Mammary epithelial cell (primary cell): ENCODE measurements at regions of chr17 and their contacts with region 1.

Region 1: DNA sequence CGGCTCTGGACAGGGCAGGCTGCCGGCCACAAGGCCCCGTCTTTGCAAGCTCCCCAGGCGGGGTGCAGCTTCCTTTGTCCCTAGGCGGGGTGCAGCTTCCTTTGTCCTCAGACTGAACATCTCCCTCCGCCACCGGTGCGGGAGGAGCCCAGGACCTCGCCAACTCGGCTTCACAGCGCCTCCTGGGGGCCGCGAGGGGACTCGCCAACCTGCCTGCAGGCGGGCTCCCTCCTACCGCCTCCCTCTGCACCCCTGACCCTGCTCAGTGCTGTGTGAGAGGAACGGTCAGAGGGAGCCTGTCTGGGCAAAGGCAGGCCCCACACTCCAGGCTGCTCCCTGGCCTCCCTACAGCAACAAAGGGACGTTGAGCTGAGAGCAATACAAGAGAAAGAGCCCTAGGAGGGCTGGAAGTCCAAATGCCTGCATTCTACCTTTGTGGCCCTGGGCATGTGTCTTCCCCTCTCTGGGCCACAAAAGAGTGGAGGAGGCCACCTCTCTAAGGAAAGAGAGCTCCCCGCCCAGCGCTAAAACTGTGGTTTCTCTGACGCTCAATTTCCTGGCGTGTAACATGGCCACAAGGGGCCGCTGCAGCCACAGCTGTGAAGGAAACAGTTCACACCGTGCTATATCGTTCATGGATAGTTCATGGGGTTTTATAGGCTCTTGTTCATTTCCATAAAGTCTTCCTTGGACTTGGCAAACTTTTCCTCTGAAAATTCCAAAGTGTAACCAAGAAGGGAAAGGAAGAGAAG is 20.9 kb upstream of the KRT19 start:
- DNase-seq: peak; percentile 91
- H3K4me3 ChIP-seq: peak overlapping the region in 1 of 3 experiments; percentile 23
- H3K27ac ChIP-seq: peak overlapping the region; percentile 85
- H3K4me1 ChIP-seq: peaks cover 52% of the 10 kb centered on the region
- H3K27me3 ChIP-seq: no peaks in the 10 kb centered on the region
- CTCF ChIP-seq: peak; percentile 91 to 96

Region 2: GRCh38 chr17:40854159-40854814 is 694.7 kb before region 1 on chr17:
- CTCF ChIA-PET with region 1: interaction called, 3 read pairs
- dilution Hi-C with region 1: no loop called
- in situ Hi-C with region 1: no loop called
- intact Hi-C with region 1: loop called (anchors 1 kb)
- DNase-seq: peak; percentile 84
- H3K4me3 ChIP-seq: no peak overlapping the region
- H3K27ac ChIP-seq: no peak overlapping the region
- H3K4me1 ChIP-seq: peaks cover 20% of the 10 kb centered on the region
- H3K27me3 ChIP-seq: no peaks in the 10 kb centered on the region
- CTCF ChIP-seq: no peak

Region 3: DNA sequence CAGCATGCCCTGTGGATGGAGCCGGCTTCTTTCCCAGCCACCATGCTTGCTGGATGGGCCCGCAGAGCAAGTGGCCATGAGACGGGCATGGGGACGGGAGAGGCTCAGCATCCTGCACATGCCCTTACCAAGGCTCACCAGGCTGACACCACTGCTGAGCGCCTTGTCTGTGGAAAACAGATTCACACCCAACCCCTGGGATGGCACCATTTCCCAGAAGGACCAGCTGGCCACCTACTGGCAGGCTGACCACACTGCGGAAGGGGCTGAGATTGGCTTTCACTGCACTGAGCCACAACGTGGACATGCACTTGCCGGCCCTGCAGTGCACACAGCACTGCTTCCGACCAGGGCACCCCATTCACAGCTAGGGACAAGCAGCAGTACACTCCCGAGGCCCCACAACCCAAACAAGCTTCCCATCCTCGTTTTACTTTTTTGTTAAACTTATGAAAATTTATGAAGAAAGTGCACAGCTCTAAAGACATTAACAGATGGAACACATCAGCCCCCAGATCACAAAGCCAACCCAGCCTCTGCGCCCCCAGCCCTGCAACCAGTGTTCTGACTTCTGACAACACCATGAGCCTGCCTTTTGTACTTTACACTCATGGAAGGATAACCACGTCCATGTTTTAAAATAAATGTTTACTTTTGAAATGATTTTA is 219.6 kb before region 1 on chr17:
- CTCF ChIA-PET with region 1: no interaction called
- dilution Hi-C with region 1: no loop called
- in situ Hi-C with region 1: no loop called
- intact Hi-C with region 1: loop called (anchors 1 kb)
- DNase-seq: peak; percentile 52
- H3K4me3 ChIP-seq: no peak overlapping the region
- H3K27ac ChIP-seq: no peak overlapping the region
- H3K4me1 ChIP-seq: peaks cover under 1% of the 10 kb centered on the region
- H3K27me3 ChIP-seq: no peaks in the 10 kb centered on the region
- CTCF ChIP-seq: peak; percentile 88 to 96

Region 4: GRCh38 chr17:41521574-41522261 is 27.3 kb before region 1 on chr17:
- CTCF ChIA-PET with region 1: interaction called, 11 read pairs
- dilution Hi-C with region 1: no loop called
- in situ Hi-C with region 1: no loop called
- intact Hi-C with region 1: loop called (anchors 1 kb)
- DNase-seq: peak; percentile 99
- H3K4me3 ChIP-seq: peak overlapping the region in 1 of 3 experiments; percentile 19
- H3K27ac ChIP-seq: peak overlapping the region; percentile 94
- H3K4me1 ChIP-seq: peaks cover 62% of the 10 kb centered on the region
- H3K27me3 ChIP-seq: no peaks in the 10 kb centered on the region
- CTCF ChIP-seq: no peak

Region 5: GRCh38 chr17:41567317-41567716 is 18.3 kb after region 1 on chr17:
- CTCF ChIA-PET with region 1: no interaction called
- dilution Hi-C with region 1: no loop called
- in situ Hi-C with region 1: no loop called
- intact Hi-C with region 1: no loop called
- DNase-seq: no peak
- H3K4me3 ChIP-seq: no peak overlapping the region
- H3K27ac ChIP-seq: no peak overlapping the region
- H3K4me1 ChIP-seq: no peaks in the 10 kb centered on the region
- H3K27me3 ChIP-seq: no peaks in the 10 kb centered on the region
- CTCF ChIP-seq: no peak

Region 6: DNA sequence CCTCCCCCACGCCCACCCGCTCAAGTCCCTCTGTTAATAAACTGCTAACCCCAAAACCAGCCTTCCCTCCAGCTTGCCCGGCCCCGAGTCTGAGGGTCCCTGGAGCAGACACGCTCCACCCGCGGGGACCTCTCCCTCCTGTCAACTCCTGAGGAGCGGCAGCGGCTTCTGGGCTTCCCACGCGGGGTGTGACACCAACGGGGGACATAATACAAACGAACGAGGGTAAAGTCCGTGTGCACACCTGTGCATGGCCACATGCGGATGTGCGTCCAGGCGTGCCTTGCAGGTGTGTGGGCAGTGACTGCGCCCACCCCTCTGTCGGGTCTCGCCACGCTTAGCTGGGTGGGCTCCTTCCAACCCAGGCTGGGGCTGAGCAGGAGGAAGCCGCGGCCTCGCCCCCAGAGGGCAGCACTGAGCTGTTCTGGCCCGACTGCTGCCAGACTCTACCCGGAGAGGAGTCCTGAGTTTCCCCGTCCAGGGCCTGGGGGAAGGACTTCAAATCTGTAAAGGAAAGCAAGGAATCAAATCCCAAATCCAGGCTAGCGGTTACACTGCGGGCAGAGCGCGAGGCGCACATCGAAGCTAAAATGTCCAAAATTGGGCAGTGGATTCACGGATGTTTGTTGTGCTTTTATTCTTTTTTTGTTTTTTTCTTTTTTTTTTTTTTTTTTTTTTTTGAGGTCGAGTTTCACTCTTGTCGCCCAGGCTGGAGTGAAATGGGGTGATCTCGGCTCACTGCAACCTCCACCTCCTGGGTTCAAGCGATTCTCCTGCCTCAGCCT is 99.6 kb after region 1 on chr17:
- CTCF ChIA-PET with region 1: interaction called, 12 read pairs
- dilution Hi-C with region 1: loop called (anchors 5 kb)
- in situ Hi-C with region 1: no loop called
- intact Hi-C with region 1: loop called (anchors 1 kb)
- DNase-seq: peak; percentile 76
- H3K4me3 ChIP-seq: no peak overlapping the region
- H3K27ac ChIP-seq: peak overlapping the region; percentile 77
- H3K4me1 ChIP-seq: peaks cover 70% of the 10 kb centered on the region
- H3K27me3 ChIP-seq: no peaks in the 10 kb centered on the region
- CTCF ChIP-seq: peak; percentile 83 to 97

Region 7: DNA sequence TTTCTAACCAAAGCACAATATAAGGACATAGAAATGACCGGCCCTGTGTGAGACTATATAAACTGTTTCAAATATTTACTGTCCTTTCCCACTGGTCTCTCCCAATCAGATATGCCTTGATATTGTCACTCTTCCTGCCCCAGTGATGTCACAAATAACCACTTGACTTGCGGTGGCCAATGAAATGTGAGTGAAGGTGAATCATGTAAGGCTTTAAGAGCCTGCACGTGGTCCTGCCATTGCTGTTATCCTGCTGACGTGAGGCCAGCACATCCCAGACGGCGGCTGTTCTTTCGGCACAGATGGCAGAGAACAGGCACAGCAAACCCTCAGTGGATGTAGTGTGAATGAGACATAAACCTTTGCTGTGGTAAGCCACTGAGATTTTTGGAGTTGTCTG is 321.6 kb after region 1 on chr17:
- CTCF ChIA-PET with region 1: no interaction called
- dilution Hi-C with region 1: no loop called
- in situ Hi-C with region 1: no loop called
- intact Hi-C with region 1: no loop called
- DNase-seq: no peak
- H3K4me3 ChIP-seq: no peak overlapping the region
- H3K27ac ChIP-seq: no peak overlapping the region
- H3K4me1 ChIP-seq: no peaks in the 10 kb centered on the region
- H3K27me3 ChIP-seq: no peaks in the 10 kb centered on the region
- CTCF ChIP-seq: no peak